GM23248 (cell line): ENCODE measurements at regions of chr9 and their contacts with region 1.

Region 1: GRCh38 chr9:21465859-21466518 is 16.1 kb downstream of the IFNE start:
- DNase-seq: peak; percentile 68
- H3K4me3 ChIP-seq: no peak overlapping the region
- H3K27ac ChIP-seq: peak overlapping the region; percentile 6; the same call in 1 of the 2 replicates
- H3K4me1 ChIP-seq: 0 out of 2 replicates have a peak, but pooled peaks cover 6% of the 10 kb centered on the region
- H3K27me3 ChIP-seq: no peaks in the 10 kb centered on the region

Region 2: GRCh38 chr9:21696411-21696873 is 230.5 kb after region 1 on chr9:
- in situ Hi-C with region 1: loop called (anchors 10 kb)
- DNase-seq: peak; percentile 34
- H3K4me3 ChIP-seq: no peak overlapping the region
- H3K27ac ChIP-seq: no peak overlapping the region
- H3K4me1 ChIP-seq: no peaks in the 10 kb centered on the region
- H3K27me3 ChIP-seq: no peaks in the 10 kb centered on the region